IMR-90 (cell line): ENCODE measurements at regions of chr3 and their contacts with region 1.

Region 1: GRCh38 chr3:160018959-160019358 is 30.3 kb downstream of the IL12A start:
- DNase-seq: no peak
- ATAC-seq: no peak
- H3K4me3 ChIP-seq: no peak overlapping the region
- H3K27ac ChIP-seq: no peak overlapping the region
- H3K4me1 ChIP-seq: peaks cover 4% of the 10 kb centered on the region; the same call in 1 of the 2 replicates
- H3K27me3 ChIP-seq: no peaks in the 10 kb centered on the region
- CTCF ChIP-seq: no peak
- POLR2A ChIP-seq: no peak
- RAD21 ChIP-seq: no peak

Region 2: DNA sequence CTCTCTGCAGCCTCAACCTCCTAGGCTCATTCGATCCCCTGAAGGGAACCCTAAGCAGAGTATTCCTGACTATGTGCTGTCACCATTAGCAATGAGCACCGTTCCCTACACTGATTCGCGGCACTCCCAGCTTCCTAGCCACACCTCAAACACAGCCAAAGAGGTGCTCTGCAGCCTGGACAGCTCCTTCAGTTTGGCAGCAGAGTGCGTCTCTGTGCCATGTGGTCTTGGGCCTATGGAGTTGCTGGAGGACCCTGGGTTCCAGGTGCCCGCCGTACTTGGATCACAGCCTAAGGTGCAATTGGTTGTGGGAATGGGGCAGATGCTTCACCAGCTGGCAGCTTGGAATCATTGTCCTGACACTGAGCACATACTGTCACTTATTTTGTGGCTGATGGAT is 47.6 kb before region 1 on chr3:
- CTCF ChIA-PET with region 1: no interaction called
- POLR2A ChIA-PET with region 1: no interaction called
- dilution Hi-C with region 1: no loop called
- in situ Hi-C with region 1: no loop called
- intact Hi-C with region 1: no loop called
- DNase-seq: no peak
- ATAC-seq: no peak
- H3K4me3 ChIP-seq: no peak overlapping the region
- H3K27ac ChIP-seq: no peak overlapping the region
- H3K4me1 ChIP-seq: no peaks in the 10 kb centered on the region
- H3K27me3 ChIP-seq: no peaks in the 10 kb centered on the region
- CTCF ChIP-seq: no peak
- POLR2A ChIP-seq: no peak
- RAD21 ChIP-seq: no peak

Region 3: DNA sequence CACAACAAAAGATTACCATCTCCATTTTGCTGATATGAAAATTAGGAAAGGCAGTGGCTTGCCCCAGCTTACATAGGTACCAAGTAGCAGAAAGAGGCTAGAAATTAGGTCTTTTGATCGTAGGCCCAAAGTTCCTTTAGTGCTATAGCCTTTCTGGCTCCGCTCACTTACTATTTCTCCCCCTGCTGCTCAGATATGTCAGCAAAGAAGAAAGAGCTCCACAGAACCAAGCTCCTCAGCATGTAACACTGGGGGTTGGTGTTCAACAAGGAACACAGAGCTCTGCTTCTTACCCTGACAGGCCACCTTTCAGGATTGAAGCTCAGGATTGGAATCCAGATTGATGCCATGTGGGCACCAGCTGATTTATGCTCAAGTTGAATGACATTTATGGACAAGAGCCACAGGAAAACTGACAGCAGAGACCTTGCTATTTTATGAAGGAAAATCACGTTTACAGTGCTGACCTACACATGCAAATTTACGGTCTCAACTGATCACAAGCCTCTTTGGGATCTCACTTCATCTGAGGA is 36.5 kb before region 1 on chr3:
- CTCF ChIA-PET with region 1: no interaction called
- POLR2A ChIA-PET with region 1: no interaction called
- dilution Hi-C with region 1: no loop called
- in situ Hi-C with region 1: no loop called
- intact Hi-C with region 1: loop called (anchors 1 kb)
- DNase-seq: no peak
- ATAC-seq: no peak
- H3K4me3 ChIP-seq: no peak overlapping the region
- H3K27ac ChIP-seq: no peak overlapping the region
- H3K4me1 ChIP-seq: 0 out of 2 replicates have a peak, but pooled peaks cover 3% of the 10 kb centered on the region
- H3K27me3 ChIP-seq: no peaks in the 10 kb centered on the region
- CTCF ChIP-seq: no peak
- POLR2A ChIP-seq: no peak
- RAD21 ChIP-seq: no peak